Activated naive CD4-positive, alpha-beta T cell treated with anti-CD3 and anti-CD28 coated beads for 36 hours (primary cell): ENCODE measurements at regions of chr1 and their contacts with region 1.

Region 1: DNA sequence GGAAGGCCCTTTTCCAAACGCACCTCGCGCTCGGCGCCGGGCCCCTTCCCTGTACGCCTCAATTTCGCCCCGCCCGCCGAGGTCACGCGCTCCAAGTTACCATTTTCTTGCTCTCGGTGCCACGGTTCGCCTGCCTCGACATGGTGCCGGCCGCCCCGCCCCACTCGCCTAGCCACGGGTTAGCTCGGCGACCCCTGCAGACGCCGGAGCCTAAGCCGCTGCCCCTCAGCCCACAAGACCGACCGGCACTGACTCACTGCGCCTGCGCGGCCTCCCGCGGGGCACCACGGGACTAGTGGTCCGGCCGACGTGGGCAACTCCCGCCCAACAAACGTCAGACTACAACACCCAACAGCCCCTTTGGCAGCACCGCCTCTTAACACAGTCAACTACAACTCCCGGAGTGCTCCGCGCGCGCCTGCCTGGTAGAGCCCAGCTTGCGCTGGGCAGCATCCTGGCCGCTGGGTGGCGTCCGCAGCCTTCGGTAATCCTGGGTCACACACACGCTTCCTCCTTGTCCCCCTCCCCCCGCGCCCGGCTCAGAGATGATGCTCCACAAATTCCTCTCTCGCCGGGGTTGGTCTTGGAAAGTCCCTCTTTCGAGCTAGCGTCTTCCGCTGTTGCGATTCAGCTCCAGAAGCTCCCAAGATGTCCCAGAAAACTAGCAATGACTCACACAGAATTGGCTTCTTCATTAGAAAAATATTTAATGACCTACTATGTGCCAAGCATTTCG is at the start of gene TRAPPC3:
- DNase-seq: peak; percentile 100
- H3K4me3 Mint-ChIP-seq: peak within 1 kb of the TSS; percentile 99
- H3K27ac Mint-ChIP-seq: peak within 1 kb of the TSS; percentile 88
- H3K4me1 Mint-ChIP-seq: peaks cover 67% of the 10 kb centered on the region
- H3K27me3 Mint-ChIP-seq: no peaks in the 10 kb centered on the region
- total RNA-seq, gene TRAPPC3: 35.9 to 37.6 TPM

Region 2: GRCh38 chr1:35882945-35883634 is 266.3 kb before region 1 on chr1 and contains the start of gene AGO1:
- CTCF ChIA-PET with region 1: no interaction called
- intact Hi-C with region 1: loop called (anchors 2 kb)
- DNase-seq: peak; percentile 97
- H3K4me3 Mint-ChIP-seq: peak within 1 kb of the TSS; percentile 89
- H3K27ac Mint-ChIP-seq: peak within 1 kb of the TSS; percentile 37
- H3K4me1 Mint-ChIP-seq: peaks cover 43% of the 10 kb centered on the region
- H3K27me3 Mint-ChIP-seq: no peaks in the 10 kb centered on the region
- total RNA-seq, gene AGO1: 24.9 to 25.3 TPM

Region 3: DNA sequence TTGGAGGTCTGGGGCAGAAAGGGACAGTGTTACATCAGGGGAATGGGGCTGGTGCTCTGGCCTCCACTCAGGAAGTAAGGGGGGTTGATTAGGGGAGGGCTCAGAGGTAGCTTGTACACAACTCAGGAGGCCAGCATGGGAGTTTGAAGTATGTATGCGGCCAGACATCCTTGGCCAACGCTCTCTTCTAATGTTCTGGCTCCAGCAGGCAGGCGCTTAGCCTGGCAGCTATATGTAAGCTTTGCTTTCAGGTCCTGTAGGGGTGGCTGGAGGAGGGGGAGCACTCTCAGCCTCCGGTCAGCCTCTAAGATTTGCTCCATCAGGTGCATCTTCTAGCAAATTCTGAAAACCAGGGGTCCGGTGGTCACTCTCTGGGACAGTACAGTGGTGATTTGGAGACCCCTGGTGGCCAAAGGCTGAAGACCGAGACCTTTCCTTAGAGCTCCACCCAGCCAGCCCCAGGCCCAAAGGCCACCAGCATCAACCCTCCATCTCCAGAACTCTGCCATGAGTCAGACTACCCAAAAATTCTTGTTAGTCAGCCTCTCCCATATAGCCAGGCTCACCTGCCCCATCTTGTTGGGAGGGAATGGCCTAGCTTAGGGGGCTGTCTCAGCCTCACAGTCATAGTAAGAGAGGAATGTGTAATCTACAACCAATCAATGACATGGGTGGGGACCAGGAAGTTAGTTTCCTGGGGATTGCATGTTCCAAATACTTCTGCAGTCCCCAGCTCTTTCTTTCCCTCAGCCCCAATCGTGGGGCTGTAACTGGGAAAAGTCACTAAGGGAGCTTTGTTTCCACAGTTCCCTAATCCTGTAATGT is 14.7 kb before region 1 on chr1:
- CTCF ChIA-PET with region 1: interaction called, 13 read pairs
- intact Hi-C with region 1: no loop called
- DNase-seq: peak; percentile 57
- H3K4me3 Mint-ChIP-seq: no peak overlapping the region
- H3K27ac Mint-ChIP-seq: no peak overlapping the region
- H3K4me1 Mint-ChIP-seq: peaks cover 2% of the 10 kb centered on the region
- H3K27me3 Mint-ChIP-seq: no peaks in the 10 kb centered on the region

Region 4: DNA sequence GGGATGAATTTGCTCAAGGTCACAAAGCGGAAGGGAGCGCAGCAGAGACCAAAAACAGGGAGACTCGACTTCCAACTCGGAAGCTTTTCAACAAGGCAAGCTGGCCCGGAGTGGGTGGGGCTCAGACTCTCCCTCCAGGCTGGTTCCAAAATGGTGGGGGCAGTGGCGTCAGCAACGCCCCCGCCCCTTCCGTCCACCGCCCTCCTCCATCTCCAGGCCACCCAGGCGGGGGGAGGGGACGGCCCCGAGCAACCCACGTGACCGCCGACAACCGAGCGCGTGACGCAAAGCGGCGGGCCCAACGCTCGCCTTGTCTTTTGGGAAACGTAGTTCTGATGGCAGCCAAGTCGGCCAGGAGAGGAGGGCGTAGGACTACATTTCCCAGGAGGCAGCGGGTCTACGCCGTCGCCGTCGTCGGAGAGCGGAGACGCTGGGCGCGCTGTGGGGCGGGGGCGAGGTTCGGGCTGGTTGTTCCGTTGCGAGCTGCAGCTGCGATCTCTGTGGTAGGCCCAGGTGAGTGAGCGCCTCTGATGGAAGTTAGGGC is 74.7 kb after region 1 on chr1 and contains the start of gene THRAP3:
- CTCF ChIA-PET with region 1: interaction called, 24 read pairs
- intact Hi-C with region 1: loop called (anchors 1 kb)
- DNase-seq: peak; percentile 100
- H3K4me3 Mint-ChIP-seq: peak within 1 kb of the TSS; percentile 90
- H3K27ac Mint-ChIP-seq: peak within 1 kb of the TSS; percentile 98
- H3K4me1 Mint-ChIP-seq: peaks cover 38% of the 10 kb centered on the region
- H3K27me3 Mint-ChIP-seq: no peaks in the 10 kb centered on the region
- total RNA-seq, gene THRAP3: 128 to 133 TPM

Region 5: GRCh38 chr1:36306902-36307456 is 157.6 kb after region 1 on chr1:
- CTCF ChIA-PET with region 1: interaction called, 6 read pairs
- intact Hi-C with region 1: loop called (anchors 1 kb)
- DNase-seq: peak; percentile 89
- H3K4me3 Mint-ChIP-seq: peak overlapping the region; percentile 96
- H3K27ac Mint-ChIP-seq: no peak overlapping the region
- H3K4me1 Mint-ChIP-seq: peaks cover 48% of the 10 kb centered on the region
- H3K27me3 Mint-ChIP-seq: no peaks in the 10 kb centered on the region

Region 6: DNA sequence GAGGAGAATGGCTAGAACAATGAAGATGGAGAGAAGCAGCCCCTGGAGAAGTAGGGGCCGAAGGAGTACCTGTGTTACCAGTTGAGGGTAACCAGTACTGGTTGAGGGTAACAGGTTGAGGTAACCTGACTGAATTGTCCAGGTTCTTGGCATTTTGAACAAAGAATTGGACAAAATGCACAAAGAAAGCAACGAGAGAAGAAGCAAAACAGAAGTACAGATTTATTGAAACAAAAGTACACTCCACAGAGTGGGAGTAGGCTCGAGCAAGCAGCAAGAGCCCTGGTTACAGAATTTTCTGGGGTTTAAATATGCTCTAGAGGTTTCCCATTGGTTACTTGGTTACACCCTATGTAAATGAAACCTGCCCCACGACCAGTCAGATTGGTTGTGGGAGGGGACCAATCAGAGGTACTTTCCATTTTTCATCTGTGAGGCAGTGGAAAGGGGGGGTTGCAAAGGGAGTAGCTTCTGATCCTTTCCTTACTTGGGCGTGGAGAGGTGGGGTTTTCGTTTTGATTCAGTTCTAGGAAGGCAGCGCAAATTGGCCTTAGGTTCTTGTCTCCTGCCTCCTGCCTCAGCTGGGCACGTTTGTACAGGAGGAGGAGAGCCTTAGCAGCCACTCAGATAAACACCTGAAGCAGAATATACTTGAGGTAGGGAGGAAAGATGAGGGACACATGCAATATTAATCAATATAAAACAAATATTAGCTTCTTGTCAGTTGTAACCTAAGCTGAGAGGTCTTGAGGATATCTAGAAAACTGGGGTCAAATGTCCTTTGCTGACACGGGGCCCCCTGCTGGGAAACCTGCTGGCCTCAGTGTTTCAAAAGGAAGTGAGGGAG is 262.5 kb after region 1 on chr1:
- CTCF ChIA-PET with region 1: interaction called, 5 read pairs
- intact Hi-C with region 1: loop called (anchors 2 kb)
- DNase-seq: peak; percentile 83
- H3K4me3 Mint-ChIP-seq: no peak overlapping the region
- H3K27ac Mint-ChIP-seq: peak overlapping the region; percentile 85
- H3K4me1 Mint-ChIP-seq: peaks cover 16% of the 10 kb centered on the region
- H3K27me3 Mint-ChIP-seq: no peaks in the 10 kb centered on the region

Region 7: GRCh38 chr1:37514350-37515184 is 1365.2 kb after region 1 on chr1 and contains the start of gene MEAF6:
- CTCF ChIA-PET with region 1: no interaction called
- intact Hi-C with region 1: loop called (anchors 10 kb)
- DNase-seq: peak; percentile 81
- H3K4me3 Mint-ChIP-seq: peak within 1 kb of the TSS; percentile 91
- H3K27ac Mint-ChIP-seq: peak within 1 kb of the TSS; percentile 95
- H3K4me1 Mint-ChIP-seq: peaks cover 40% of the 10 kb centered on the region
- H3K27me3 Mint-ChIP-seq: no peaks in the 10 kb centered on the region
- total RNA-seq, gene MEAF6: 57.5 to 62.8 TPM